Activated CD8-positive, alpha-beta memory T cell treated with anti-CD3 and anti-CD28 coated beads, Interleukin-2, amount 10 ng/mL, durations not matched to agents 7 days and 5 days (primary cell): ENCODE measurements at regions of chr3 and their contacts with region 1.

Region 1: DNA sequence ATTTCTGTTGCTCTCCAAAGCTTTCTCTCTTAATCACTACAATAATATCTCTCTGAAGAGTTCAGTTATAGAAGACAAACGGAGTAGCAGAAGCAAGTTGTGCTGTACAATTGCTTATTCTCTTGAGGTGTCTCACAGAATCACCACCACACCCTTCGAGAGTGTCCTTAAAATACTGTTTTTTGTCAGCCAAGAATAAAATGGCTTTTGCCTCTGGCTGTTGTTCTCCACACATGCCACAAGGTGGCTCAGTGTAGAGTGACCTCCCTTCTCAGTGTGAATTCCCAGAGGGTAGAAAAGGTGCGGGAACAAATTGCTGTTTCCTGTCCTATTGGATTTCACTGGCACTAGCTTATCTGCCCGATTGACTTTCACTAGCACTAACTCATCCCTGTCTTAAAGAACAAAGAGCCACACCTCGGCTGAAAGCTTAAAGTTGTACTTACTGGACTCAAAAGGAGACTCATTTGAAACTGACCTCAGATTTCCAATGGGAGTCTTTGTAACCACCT is 134.2 kb upstream of the SATB1 start:
- DNase-seq: peak; percentile 59
- ATAC-seq: peak; percentile 31
- H3K4me3 Mint-ChIP-seq: peak overlapping the region; percentile 37
- H3K27ac Mint-ChIP-seq: peak overlapping the region; percentile 91
- H3K4me1 Mint-ChIP-seq: peaks cover 64% of the 10 kb centered on the region
- H3K27me3 Mint-ChIP-seq: no peaks in the 10 kb centered on the region

Region 2: DNA sequence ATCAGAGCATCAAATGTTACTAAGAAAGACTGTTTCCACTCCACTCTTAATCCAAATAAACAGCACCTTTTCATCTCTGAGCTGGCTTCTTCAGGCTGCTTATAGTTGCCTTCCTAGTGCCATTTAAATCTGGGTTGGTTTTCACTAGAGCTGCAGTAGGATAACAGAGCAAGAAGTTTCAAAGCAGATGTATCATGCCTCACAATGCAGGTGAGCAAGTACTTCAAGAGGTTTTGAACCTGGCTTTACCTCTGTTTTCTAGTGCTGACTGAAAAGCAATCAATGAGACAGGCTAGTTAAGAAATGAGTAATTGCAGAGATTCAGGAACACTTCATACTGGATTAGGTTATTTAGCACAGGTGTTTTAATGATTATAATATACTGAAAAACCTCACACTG is 13.4 kb after region 1 on chr3:
- CTCF ChIA-PET with region 1: interaction called, 14 read pairs
- DNase-seq: no peak
- ATAC-seq: no peak
- H3K4me3 Mint-ChIP-seq: no peak overlapping the region
- H3K27ac Mint-ChIP-seq: no peak overlapping the region
- H3K4me1 Mint-ChIP-seq: peaks cover 19% of the 10 kb centered on the region
- H3K27me3 Mint-ChIP-seq: no peaks in the 10 kb centered on the region

Region 3: DNA sequence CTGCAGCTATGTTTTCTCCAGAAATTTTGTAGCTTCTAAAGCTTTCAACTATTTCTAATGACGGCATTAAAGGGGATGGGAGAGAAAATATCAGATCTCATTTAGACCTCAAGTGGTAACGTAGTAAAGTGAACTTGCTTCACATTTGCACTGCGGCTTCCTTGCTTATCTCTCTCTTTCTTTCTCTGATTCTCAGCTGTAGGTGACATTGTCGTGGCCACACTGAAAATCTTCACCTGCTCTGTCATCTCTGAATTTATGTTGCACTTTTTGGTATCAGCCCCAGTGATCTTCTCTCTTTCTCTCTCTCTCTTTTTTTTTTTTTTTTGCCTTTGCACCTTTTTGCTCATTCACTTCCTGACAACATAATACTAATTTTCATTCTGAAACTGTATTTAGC is 119.9 kb after region 1 on chr3:
- CTCF ChIA-PET with region 1: interaction called, 10 read pairs
- DNase-seq: peak; percentile 81
- ATAC-seq: peak; percentile 79
- H3K4me3 Mint-ChIP-seq: peak overlapping the region; percentile 51
- H3K27ac Mint-ChIP-seq: peak overlapping the region; percentile 89
- H3K4me1 Mint-ChIP-seq: peaks cover 87% of the 10 kb centered on the region
- H3K27me3 Mint-ChIP-seq: no peaks in the 10 kb centered on the region

Region 4: GRCh38 chr3:18717598-18717997 is 158.2 kb after region 1 on chr3:
- CTCF ChIA-PET with region 1: interaction called, 13 read pairs
- DNase-seq: no peak
- ATAC-seq: peak; percentile 31
- H3K4me3 Mint-ChIP-seq: peak overlapping the region; percentile 24
- H3K27ac Mint-ChIP-seq: peak overlapping the region; percentile 97
- H3K4me1 Mint-ChIP-seq: peaks cover 74% of the 10 kb centered on the region
- H3K27me3 Mint-ChIP-seq: no peaks in the 10 kb centered on the region